ENCODE measurements at regions of chr10 and their contacts with region 1.

Region 1: GRCh38 chr10:133565441-133566294 is at the start of gene SYCE1:
- DNase-seq: peak; percentile 14
- ATAC-seq: no peak
- H3K4me3 Mint-ChIP-seq: no peak within 1 kb of the TSS
- H3K27ac Mint-ChIP-seq: no peak within 1 kb of the TSS
- H3K4me1 Mint-ChIP-seq: no peaks in the 10 kb centered on the region
- H3K27me3 Mint-ChIP-seq: peaks cover 10% of the 10 kb centered on the region
- total RNA-seq, gene SYCE1: 0.19 to 0.66 TPM

Region 2: GRCh38 chr10:132076578-132077081 is 1489.0 kb before region 1 on chr10:
- CTCF ChIA-PET with region 1: no interaction called
- POLR2A ChIA-PET with region 1: no interaction called
- intact Hi-C with region 1: no loop called
- DNase-seq: no peak
- ATAC-seq: no peak
- H3K4me3 Mint-ChIP-seq: no peak overlapping the region
- H3K27ac Mint-ChIP-seq: no peak overlapping the region
- H3K4me1 Mint-ChIP-seq: no peaks in the 10 kb centered on the region
- H3K27me3 Mint-ChIP-seq: peaks cover 15% of the 10 kb centered on the region

Region 3: GRCh38 chr10:133422821-133423771 is 142.6 kb before region 1 on chr10:
- CTCF ChIA-PET with region 1: no interaction called
- POLR2A ChIA-PET with region 1: no interaction called
- intact Hi-C with region 1: loop called in 1 of 2 experiments (anchors 5 kb)
- DNase-seq: no peak
- ATAC-seq: peak; percentile 43
- H3K4me3 Mint-ChIP-seq: no peak overlapping the region
- H3K27ac Mint-ChIP-seq: no peak overlapping the region
- H3K4me1 Mint-ChIP-seq: no peaks in the 10 kb centered on the region
- H3K27me3 Mint-ChIP-seq: peaks cover 2% of the 10 kb centered on the region

Measured in activated CD4-positive, alpha-beta T cell treated with anti-CD3 and anti-CD28 coated beads for 36 hours (primary cell).